ENCODE measurements at regions of chr3 and their contacts with region 1.

Region 1: GRCh38 chr3:41915353-41915752 is 46.5 kb downstream of the ULK4 start:
- DNase-seq: no peak
- ATAC-seq: no peak
- H3K4me3 ChIP-seq: no peak overlapping the region
- H3K27ac ChIP-seq: no peak overlapping the region
- H3K4me1 ChIP-seq: no peaks in the 10 kb centered on the region
- H3K27me3 ChIP-seq: no peaks in the 10 kb centered on the region
- CTCF ChIP-seq: no peak
- POLR2A ChIP-seq: no peak
- RAD21 ChIP-seq: no peak

Region 2: DNA sequence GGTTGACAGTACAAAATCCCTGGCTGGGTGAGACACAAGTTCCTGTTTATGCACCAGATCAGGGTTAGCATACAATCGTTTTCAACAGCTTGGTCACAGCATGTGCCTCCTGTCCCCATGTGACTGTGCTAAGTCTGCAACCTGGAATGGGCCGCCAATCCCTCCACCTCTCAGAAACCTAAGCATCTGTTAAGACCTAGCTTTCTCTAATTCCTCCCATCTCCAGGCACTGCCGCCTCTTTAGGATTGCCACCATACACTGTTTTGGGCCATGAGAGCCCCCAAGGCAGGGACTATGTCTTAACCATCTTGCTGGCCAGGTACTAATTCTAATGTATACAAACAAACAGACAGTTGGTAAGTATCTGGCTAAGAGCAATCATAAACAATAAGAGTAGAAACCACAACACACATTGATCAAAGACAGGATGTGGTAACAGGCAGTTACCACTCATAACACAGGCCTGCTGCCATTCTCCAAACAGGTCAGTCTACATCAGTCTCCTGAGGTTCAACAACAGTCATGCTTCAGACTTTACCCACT is 640.8 kb after region 1 on chr3:
- CTCF ChIA-PET with region 1: no interaction called
- POLR2A ChIA-PET with region 1: no interaction called
- RAD21 ChIA-PET with region 1: no interaction called
- intact Hi-C with region 1: loop called (anchors 10 kb)
- DNase-seq: no peak
- ATAC-seq: no peak
- H3K4me3 ChIP-seq: no peak overlapping the region
- H3K27ac ChIP-seq: no peak overlapping the region
- H3K4me1 ChIP-seq: no peaks in the 10 kb centered on the region
- H3K27me3 ChIP-seq: no peaks in the 10 kb centered on the region
- CTCF ChIP-seq: no peak
- POLR2A ChIP-seq: no peak
- RAD21 ChIP-seq: no peak

Measured in HCT116 (cell line).